Left ventricle myocardium inferior (tissue), 1 donor: ENCODE measurements at regions of chr13 and their contacts with region 1.

Region 1: GRCh38 chr13:99033814-99034213 is 56.0 kb upstream of the DOCK9 start:
- DNase-seq: no peak
- H3K4me3 ChIP-seq: no peak overlapping the region
- H3K27ac ChIP-seq: no peak overlapping the region
- H3K4me1 ChIP-seq: peaks cover 18% of the 10 kb centered on the region
- H3K27me3 ChIP-seq: no peaks in the 10 kb centered on the region
- CTCF ChIP-seq: peak; percentile 76

Region 2: GRCh38 chr13:98842864-98843481 is 190.8 kb before region 1 on chr13:
- intact Hi-C with region 1: loop called (anchors 5 kb)
- DNase-seq: peak; percentile 48
- H3K4me3 ChIP-seq: no peak overlapping the region
- H3K27ac ChIP-seq: peak overlapping the region; percentile 31
- H3K4me1 ChIP-seq: peaks cover 17% of the 10 kb centered on the region
- H3K27me3 ChIP-seq: no peaks in the 10 kb centered on the region
- CTCF ChIP-seq: peak; percentile 93

Region 3: GRCh38 chr13:98910501-98910951 is 123.3 kb before region 1 on chr13:
- intact Hi-C with region 1: loop called (anchors 10 kb)
- DNase-seq: no peak
- H3K4me3 ChIP-seq: no peak overlapping the region
- H3K27ac ChIP-seq: peak overlapping the region; percentile 75
- H3K4me1 ChIP-seq: peaks cover 55% of the 10 kb centered on the region
- H3K27me3 ChIP-seq: no peaks in the 10 kb centered on the region
- CTCF ChIP-seq: no peak